Right ventricle myocardium inferior (tissue), 1 donor: ENCODE measurements at regions of chr10 and their contacts with region 1.

Region 1: GRCh38 chr10:17257466-17258321 is 29.7 kb downstream of the VIM start:
- DNase-seq: no peak
- ATAC-seq: peak; percentile 82

Region 2: GRCh38 chr10:16828114-16828568 is 429.6 kb before region 1 on chr10:
- intact Hi-C with region 1: loop called (anchors 5 kb)
- DNase-seq: peak; percentile 68
- ATAC-seq: peak; percentile 88

Region 3: GRCh38 chr10:16843252-16843870 is 414.3 kb before region 1 on chr10:
- intact Hi-C with region 1: loop called (anchors 1 kb)
- DNase-seq: no peak
- ATAC-seq: no peak

Region 4: DNA sequence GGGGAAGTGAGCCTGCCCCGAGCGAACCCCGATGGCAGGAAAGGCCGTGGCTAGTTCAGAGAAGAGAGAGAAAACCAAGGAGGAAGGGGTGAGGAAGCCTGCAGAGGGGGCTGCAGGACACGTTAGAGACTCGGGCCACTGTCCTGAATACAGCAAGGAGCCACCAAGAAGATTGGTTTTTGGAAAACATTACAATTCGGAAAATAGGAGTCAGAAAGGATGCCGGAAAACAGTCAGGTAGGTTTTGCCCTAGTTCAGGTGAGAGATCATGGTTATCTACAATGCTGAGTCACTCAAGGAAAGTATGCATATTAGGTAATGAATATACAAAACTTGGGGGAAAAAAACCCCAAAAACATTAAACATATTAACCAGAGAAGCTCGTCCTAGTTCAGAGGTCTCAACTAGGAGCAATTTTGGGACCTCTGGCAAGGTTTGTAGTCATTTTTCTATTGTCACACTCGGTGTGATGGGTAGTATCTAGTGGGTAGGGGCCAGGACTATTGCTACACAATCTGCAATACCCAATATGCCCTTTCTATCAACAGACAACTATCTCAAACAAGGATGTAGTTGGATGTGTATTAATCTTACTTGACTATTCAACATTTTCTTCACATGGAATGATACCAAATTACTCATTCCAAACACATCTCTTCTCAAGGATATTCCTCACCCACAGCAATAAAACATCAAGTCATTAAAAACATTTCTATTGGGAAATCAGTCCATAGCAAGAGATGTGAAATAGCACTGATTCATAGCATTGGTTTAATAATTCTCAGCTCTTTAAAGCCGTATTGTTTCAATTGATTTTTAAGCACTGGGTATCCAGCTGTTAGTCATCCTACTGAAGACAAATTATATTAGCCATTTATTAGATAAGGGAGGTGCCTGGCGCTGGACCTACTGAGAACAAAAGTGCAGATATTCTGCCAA is 366.1 kb before region 1 on chr10:
- intact Hi-C with region 1: loop called (anchors 5 kb)
- DNase-seq: peak; percentile 78
- ATAC-seq: peak; percentile 96

Region 5: GRCh38 chr10:17122726-17123661 is 134.7 kb before region 1 on chr10:
- intact Hi-C with region 1: no loop called
- DNase-seq: no peak
- ATAC-seq: no peak